HepG2 (cell line): ENCODE measurements at regions of chr22 and their contacts with region 1.

Region 1: GRCh38 chr22:41301105-41302020 is at the start of gene ZC3H7B:
- DNase-seq: peak; percentile 76
- ATAC-seq: peak; percentile 97
- H3K4me3 ChIP-seq: peak within 1 kb of the TSS; percentile 88 to 98 (median 93)
- H3K27ac ChIP-seq: peak within 1 kb of the TSS; percentile 82
- H3K4me1 ChIP-seq: peaks cover 56% of the 10 kb centered on the region
- H3K27me3 ChIP-seq: no peaks in the 10 kb centered on the region
- CTCF ChIP-seq: peak; percentile 74
- EP300 ChIP-seq: no peak
- POLR2A ChIP-seq: peak; percentile 69 to 90
- RAD21 ChIP-seq: peak; percentile 71
- total RNA-seq, gene ZC3H7B: 30.6 and 37.2 TPM in 2 replicates

Region 2: DNA sequence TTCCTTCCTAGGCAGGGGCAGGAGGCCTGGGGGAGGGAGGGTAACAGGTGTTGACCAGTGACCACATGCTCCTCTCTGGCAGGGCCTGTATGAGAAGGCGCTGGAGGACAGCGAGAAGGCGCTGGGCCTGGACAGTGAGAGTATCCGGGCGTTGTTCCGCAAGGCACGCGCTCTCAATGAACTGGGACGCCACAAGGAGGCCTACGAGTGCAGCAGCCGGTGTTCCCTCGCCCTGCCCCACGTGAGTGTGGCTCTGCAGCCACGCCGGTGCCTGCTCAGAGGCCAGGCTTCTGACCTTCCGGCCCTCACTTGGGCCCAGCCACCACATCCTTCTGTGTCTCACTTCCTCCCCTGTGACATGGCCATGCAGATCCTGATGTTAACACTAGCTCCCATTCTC is 25.8 kb after region 1 on chr22:
- CTCF ChIA-PET with region 1: no interaction called
- POLR2A ChIA-PET with region 1: no interaction called
- in situ Hi-C with region 1: no loop called
- intact Hi-C with region 1: no loop called
- DNase-seq: no peak
- ATAC-seq: no peak
- H3K4me3 ChIP-seq: no peak overlapping the region
- H3K27ac ChIP-seq: no peak overlapping the region
- H3K4me1 ChIP-seq: no peaks in the 10 kb centered on the region
- H3K27me3 ChIP-seq: no peaks in the 10 kb centered on the region
- CTCF ChIP-seq: no peak
- EP300 ChIP-seq: no peak
- POLR2A ChIP-seq: no peak
- RAD21 ChIP-seq: no peak

Region 3: GRCh38 chr22:41367039-41367679 is 65.8 kb after region 1 on chr22:
- CTCF ChIA-PET with region 1: no interaction called
- POLR2A ChIA-PET with region 1: no interaction called
- in situ Hi-C with region 1: no loop called
- intact Hi-C with region 1: loop called (anchors 10 kb)
- DNase-seq: peak; percentile 80
- ATAC-seq: peak; percentile 89
- H3K4me3 ChIP-seq: peak overlapping the region in 2 of 3 experiments; percentile 34 to 61; a peak in 3 of 6 replicates
- H3K27ac ChIP-seq: no peak overlapping the region
- H3K4me1 ChIP-seq: peaks cover 53% of the 10 kb centered on the region
- H3K27me3 ChIP-seq: no peaks in the 10 kb centered on the region; a peak in 1 of 5 replicates
- CTCF ChIP-seq: peak; percentile 68
- EP300 ChIP-seq: no peak
- POLR2A ChIP-seq: peak; percentile 27; a peak in 1 of 4 replicates
- RAD21 ChIP-seq: peak; percentile 60